Activated CD4-positive, alpha-beta T cell treated with anti-CD3 and anti-CD28 coated beads, Interleukin-2, amount 10 ng/mL, durations not matched to agents 24 days and 14 days (primary cell): ENCODE measurements at regions of chr10 and their contacts with region 1.

Region 1: GRCh38 chr10:98467506-98468346 is 21.0 kb upstream of the HPS1 start:
- DNase-seq: peak; percentile 87
- H3K4me3 Mint-ChIP-seq: peak overlapping the region; percentile 90
- H3K27ac Mint-ChIP-seq: peak overlapping the region; percentile 69
- H3K4me1 Mint-ChIP-seq: peaks cover 10% of the 10 kb centered on the region
- H3K27me3 Mint-ChIP-seq: peaks cover 38% of the 10 kb centered on the region

Region 2: DNA sequence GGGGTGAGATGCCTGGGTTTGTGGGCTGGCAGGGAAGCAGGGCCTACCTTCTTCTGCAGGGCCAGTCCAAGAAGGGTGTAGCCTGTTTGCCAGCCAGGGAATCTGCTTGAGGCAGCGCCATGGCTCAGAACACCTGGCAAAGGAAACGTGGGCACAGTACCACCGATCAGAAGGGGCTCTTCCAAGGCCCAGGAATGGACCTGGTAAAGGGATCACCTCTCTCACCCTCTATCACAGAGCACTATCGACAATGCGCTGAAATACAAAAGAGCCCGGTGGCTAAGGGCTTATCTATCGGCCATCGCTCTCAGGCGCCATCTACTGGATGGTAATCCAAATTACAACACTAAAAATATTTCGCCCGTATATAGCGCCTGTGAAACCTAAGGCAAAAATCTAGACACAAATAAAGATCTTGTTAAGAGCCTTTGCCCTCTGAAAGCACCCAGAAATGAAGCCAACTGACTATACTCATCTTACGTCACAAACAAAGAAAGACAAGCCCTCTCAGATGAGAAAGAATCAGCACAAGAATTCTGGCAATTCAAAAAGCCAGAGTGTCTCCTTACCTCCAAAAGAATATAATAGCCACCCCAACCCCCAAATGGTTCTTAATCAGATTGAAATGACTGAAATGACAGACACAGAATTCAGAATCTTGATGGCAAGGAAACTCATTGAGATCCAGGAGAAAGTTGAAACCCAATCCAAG is 196.8 kb after region 1 on chr10:
- intact Hi-C with region 1: loop called (anchors 1 kb)
- DNase-seq: peak; percentile 80
- H3K4me3 Mint-ChIP-seq: no peak overlapping the region
- H3K27ac Mint-ChIP-seq: no peak overlapping the region
- H3K4me1 Mint-ChIP-seq: no peaks in the 10 kb centered on the region
- H3K27me3 Mint-ChIP-seq: peaks cover 18% of the 10 kb centered on the region

Region 3: DNA sequence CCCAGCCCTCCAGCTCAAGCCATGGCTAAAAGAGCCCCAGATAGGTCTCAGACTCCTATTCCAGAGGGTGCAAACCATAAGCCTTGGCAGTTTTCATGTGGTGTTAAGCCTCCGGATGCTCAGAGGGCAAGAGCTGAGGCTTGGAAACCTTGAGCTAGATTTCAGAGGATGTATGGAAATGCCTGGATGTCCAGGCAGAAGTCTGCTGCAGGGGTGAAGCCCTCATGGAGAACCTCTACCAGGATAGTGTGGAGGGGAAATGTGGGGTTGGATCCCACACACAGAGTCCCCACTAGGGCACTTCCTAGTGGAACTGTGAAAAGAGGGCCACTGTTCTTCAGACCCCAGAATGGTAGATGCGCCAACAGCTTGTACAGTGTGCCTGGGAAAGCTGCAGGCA is 781.1 kb after region 1 on chr10:
- intact Hi-C with region 1: loop called (anchors 1 kb)
- DNase-seq: no peak
- H3K4me3 Mint-ChIP-seq: no peak overlapping the region
- H3K27ac Mint-ChIP-seq: no peak overlapping the region
- H3K4me1 Mint-ChIP-seq: no peaks in the 10 kb centered on the region
- H3K27me3 Mint-ChIP-seq: peaks cover 2% of the 10 kb centered on the region